ENCODE measurements at regions of chr5 and their contacts with region 1.

Region 1: DNA sequence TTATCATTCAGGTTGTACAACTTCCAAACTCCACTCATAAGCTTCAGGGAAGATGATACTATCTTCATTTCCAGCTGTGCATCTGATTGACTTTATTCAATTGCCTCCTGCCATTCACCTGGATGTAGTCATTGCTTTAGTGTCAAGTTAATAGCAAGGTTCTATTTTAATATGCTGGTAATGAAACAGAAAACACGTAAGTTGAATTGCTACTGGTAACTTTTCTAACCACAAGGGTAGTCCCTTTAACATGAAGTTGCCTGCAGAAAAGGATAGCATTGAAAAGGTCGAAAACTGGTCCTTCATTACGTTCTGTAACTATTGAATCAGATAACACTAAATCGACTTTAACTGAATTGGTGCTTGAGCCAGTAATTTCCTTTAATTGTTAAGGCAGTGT is 459.4 kb upstream of the CDH6 start:
- DNase-seq: no peak
- ATAC-seq: no peak
- H3K4me3 ChIP-seq: no peak overlapping the region
- H3K27ac ChIP-seq: no peak overlapping the region
- H3K4me1 ChIP-seq: no peaks in the 10 kb centered on the region
- H3K27me3 ChIP-seq: no peaks in the 10 kb centered on the region
- CTCF ChIP-seq: no peak
- EP300 ChIP-seq: no peak
- POLR2A ChIP-seq: no peak
- RAD21 ChIP-seq: no peak

Region 2: DNA sequence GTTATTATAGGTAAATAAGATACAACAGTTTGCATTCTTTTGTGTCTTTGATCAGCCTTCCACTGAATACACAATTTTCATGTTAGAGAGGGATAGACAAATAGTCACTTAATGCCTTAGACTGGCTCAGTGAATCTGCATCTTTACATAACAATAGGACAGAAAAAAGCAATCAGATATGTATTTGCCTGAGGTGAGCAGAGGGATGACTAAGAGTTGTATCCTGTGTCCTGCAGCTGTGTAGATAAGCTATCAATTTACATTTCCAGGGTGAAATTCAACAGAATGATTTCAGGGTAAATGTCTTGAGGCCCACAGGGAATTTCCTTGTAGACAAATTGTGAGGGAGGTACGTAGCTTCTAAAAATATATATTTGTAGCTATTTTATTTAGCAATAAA is 126.8 kb before region 1 on chr5:
- CTCF ChIA-PET with region 1: no interaction called
- POLR2A ChIA-PET with region 1: no interaction called
- in situ Hi-C with region 1: no loop called
- intact Hi-C with region 1: no loop called
- DNase-seq: peak; percentile 45
- ATAC-seq: peak; percentile 17; the same call in 1 of the 3 replicates
- H3K4me3 ChIP-seq: no peak overlapping the region
- H3K27ac ChIP-seq: peak overlapping the region; percentile 62
- H3K4me1 ChIP-seq: peaks cover 60% of the 10 kb centered on the region
- H3K27me3 ChIP-seq: no peaks in the 10 kb centered on the region
- CTCF ChIP-seq: no peak
- EP300 ChIP-seq: peak in 1 of 2 experiments; percentile 41; a peak in 1 of 4 replicates
- POLR2A ChIP-seq: no peak
- RAD21 ChIP-seq: no peak

Region 3: GRCh38 chr5:30749971-30750370 is 15.9 kb after region 1 on chr5:
- CTCF ChIA-PET with region 1: no interaction called
- POLR2A ChIA-PET with region 1: no interaction called
- in situ Hi-C with region 1: no loop called
- intact Hi-C with region 1: loop called (anchors 1 kb)
- DNase-seq: no peak
- ATAC-seq: no peak
- H3K4me3 ChIP-seq: no peak overlapping the region
- H3K27ac ChIP-seq: no peak overlapping the region
- H3K4me1 ChIP-seq: no peaks in the 10 kb centered on the region
- H3K27me3 ChIP-seq: no peaks in the 10 kb centered on the region
- CTCF ChIP-seq: no peak
- EP300 ChIP-seq: no peak
- POLR2A ChIP-seq: no peak
- RAD21 ChIP-seq: no peak